Left ventricle myocardium superior (tissue), 1 donor: ENCODE measurements at regions of chrX and their contacts with region 1.

Region 1: DNA sequence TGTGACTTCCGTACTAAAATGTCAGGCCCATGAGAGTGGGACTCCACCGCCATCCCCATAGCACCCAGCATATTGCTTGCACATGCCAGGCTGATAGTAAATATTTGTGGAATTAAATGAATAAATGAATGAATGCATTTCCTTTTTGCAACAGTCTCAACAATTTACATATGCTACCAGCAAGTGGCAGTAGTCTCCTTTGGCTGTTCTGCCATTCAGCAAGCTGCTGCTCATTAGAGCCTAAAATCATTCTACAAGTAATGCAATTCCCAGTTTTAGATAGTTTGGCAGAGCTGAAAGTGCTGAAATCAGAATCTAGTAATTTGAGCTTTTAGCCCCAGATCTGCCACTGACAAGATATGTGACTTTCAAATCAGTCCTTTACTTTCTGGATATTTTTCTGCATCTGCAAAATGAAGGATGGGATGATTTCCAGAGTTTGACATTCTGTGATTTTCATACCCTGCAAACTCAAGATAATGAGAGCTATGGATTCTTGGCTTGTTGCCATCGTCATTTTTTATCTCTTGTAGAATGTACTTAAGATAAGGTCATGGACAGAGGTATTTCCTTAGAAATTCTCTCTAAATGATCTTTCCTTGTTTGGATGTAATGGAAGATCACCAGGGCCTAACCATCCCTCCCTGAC is 35.7 kb upstream of the INTS6L start:
- DNase-seq: no peak
- ATAC-seq: no peak

Region 2: DNA sequence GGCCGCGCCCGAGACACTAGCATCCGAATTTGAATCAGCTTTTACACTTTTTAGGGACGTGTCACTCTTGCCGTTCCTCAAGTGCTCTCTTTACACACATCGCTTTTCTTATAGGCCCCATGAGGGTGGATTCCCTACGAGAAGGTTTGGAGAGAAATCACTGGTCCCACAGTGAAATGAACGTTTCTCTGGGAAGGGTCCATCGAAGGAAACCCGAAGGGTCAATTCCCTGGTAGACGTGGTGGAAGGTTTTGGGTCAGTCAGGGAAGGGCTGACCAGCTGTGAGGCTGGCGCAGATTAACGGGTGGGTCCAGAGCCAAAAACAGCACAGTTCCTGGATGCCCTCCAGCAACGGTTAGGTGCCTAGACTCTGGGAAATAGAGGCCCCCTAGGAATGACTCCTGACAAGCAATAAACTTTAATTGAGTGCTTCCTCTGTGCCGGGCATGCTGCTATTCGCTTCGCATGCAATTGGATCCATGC is 139.6 kb before region 1 on chrX:
- intact Hi-C with region 1: no loop called
- DNase-seq: peak; percentile 59
- ATAC-seq: peak; percentile 56

Region 3: DNA sequence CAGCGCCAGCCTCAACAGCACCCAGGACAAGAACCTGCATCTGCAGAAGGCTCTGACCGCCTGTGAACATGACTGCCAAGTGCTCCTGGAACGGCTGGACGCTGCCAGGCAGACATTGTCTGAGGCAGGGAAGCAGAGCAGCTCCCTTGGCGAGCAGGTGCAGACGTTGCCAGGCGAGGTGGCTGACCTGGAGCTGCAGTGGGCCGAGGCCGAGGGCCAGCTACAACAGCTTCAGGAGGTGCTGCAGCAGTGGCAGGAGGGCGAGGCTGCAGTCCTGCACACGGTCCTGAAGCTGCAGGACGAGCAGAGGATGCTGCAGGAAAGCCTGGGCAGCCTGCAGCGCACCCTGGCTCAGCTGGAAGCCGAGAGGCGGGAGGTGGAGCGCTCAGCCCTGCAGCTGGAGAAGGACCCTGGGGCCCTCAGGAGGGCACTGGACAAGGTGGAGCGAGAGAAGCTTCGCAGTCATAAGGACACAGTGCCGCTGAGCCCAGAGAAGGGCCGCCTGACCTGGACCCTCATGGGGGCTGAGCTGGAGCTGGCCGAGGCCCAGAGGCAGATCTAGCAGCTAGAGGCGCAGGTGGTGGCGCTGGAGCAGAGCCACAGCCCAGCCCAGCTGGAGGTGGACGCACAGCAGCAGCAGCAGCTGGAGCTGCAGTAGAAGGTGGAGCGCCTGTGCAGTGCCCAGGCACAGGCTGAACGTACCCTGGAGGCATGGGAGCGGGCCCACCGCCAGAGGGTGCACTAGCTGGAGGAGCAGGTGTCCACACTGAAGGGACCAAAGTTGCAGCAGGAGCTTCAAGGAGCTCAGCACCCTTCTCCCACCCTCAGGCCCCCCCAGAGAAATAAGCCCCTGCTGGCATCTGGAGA is 46.7 kb before region 1 on chrX:
- intact Hi-C with region 1: no loop called
- DNase-seq: no peak
- ATAC-seq: no peak

Region 4: GRCh38 chrX:135572436-135572835 is 87.7 kb after region 1 on chrX:
- intact Hi-C with region 1: loop called (anchors 10 kb)
- DNase-seq: no peak
- ATAC-seq: no peak